ENCODE measurements at regions of chrX and their contacts with region 1.

Region 1: DNA sequence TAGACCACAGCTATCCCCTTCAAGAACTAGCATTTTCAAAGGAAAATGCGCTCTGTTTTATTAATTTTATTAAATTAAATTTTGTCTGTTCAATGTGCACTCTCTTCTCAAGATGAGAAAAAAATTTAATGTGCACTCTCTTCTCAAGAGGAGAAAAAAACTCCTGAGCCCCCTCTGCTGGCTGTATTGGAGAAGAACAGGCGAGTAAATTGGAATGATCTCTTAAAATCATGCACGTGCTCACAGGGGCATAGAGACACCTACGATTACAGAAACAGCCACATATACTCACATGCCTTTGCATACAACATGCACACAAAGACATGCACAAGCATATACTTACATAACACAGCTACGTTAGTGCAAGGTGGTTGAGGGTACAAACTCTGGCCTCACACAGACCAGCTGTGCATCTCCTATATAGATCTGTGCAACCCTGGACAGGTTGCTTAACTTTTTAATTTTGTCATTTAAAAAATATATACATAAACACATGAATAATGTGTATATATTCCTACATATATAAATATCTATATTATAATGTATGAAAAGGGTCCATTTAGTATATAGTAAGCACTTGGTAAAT is 176.2 kb upstream of the CXorf66 start:
- DNase-seq: peak; percentile 48
- H3K4me3 Mint-ChIP-seq: no peak overlapping the region
- H3K27ac Mint-ChIP-seq: no peak overlapping the region
- H3K4me1 Mint-ChIP-seq: no peaks in the 10 kb centered on the region
- H3K27me3 Mint-ChIP-seq: no peaks in the 10 kb centered on the region
- CTCF ChIP-seq: peak; percentile 37

Region 2: GRCh38 chrX:140057001-140057411 is 84.5 kb before region 1 on chrX:
- CTCF ChIA-PET with region 1: no interaction called
- intact Hi-C with region 1: no loop called
- DNase-seq: peak; percentile 72
- H3K4me3 Mint-ChIP-seq: no peak overlapping the region
- H3K27ac Mint-ChIP-seq: no peak overlapping the region
- H3K4me1 Mint-ChIP-seq: peaks cover 7% of the 10 kb centered on the region
- H3K27me3 Mint-ChIP-seq: no peaks in the 10 kb centered on the region
- CTCF ChIP-seq: peak; percentile 74

Region 3: DNA sequence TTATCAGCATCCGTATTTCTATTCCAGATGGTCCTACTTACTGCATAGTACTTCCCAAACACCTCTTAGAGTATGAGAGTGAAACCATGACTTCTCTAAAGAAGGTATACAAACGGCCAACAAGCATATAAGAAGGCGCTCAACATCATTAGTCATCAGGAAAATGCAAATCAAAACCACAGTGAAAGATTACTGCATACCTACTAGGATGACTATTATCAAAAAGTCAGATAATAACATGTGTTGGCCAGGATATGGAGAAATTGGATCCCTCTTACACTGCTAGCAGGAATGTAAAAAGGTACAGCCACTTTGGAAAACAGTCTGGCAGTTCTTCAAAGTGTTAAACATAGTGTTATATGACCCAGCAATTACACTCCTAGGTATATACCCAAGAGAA is 39.0 kb after region 1 on chrX:
- CTCF ChIA-PET with region 1: no interaction called
- intact Hi-C with region 1: loop called (anchors 5 kb)
- DNase-seq: peak; percentile 2
- H3K4me3 Mint-ChIP-seq: no peak overlapping the region
- H3K27ac Mint-ChIP-seq: no peak overlapping the region
- H3K4me1 Mint-ChIP-seq: peaks cover 7% of the 10 kb centered on the region
- H3K27me3 Mint-ChIP-seq: no peaks in the 10 kb centered on the region
- CTCF ChIP-seq: no peak

Region 4: DNA sequence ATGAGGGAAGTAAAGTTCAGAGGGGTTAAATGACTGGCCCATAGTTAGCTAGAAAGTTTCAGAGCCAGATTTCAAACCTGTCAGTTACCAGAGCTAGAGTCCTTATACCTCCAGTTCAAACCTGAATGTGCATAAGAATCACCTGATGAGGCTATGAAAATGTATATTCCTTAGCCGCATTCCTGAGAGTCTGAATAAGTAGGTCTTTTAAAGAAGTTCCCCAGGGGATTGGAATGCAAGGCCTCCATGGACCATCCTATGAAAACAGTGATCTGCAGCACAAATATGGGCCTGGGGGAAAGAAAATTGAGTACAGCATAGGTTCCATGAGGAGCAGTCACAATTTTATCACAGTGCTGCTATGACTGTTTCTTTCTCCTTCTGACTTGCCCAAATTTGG is 87.7 kb after region 1 on chrX:
- CTCF ChIA-PET with region 1: no interaction called
- intact Hi-C with region 1: no loop called
- DNase-seq: no peak
- H3K4me3 Mint-ChIP-seq: no peak overlapping the region
- H3K27ac Mint-ChIP-seq: no peak overlapping the region
- H3K4me1 Mint-ChIP-seq: no peaks in the 10 kb centered on the region
- H3K27me3 Mint-ChIP-seq: no peaks in the 10 kb centered on the region
- CTCF ChIP-seq: no peak

Region 5: DNA sequence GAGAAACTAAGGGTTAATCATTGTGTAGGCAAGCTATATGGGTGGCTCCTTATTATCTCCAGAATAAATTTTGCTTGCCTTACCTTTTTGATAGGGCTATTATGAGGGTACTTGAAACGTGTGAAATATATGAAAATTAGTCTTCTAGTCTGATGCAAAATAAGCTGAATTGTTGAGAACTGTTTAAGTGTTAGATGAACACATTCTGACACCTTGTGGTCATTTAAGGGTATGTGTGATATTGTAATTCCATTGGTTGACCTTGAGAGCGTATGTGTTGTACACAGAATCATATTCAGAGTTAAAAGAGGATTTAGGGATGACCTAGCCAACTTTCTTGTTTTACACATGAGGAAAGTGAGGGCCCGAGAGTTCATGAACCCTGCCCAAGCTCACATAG is 523.4 kb after region 1 on chrX:
- CTCF ChIA-PET with region 1: no interaction called
- intact Hi-C with region 1: loop called (anchors 10 kb)
- DNase-seq: no peak
- H3K4me3 Mint-ChIP-seq: no peak overlapping the region
- H3K27ac Mint-ChIP-seq: no peak overlapping the region
- H3K4me1 Mint-ChIP-seq: no peaks in the 10 kb centered on the region
- H3K27me3 Mint-ChIP-seq: no peaks in the 10 kb centered on the region
- CTCF ChIP-seq: no peak

Measured in Calu3 (cell line).